Naive thymus-derived CD4-positive, alpha-beta T cell (primary cell): ENCODE measurements at regions of chr5 and their contacts with region 1.

Region 1: DNA sequence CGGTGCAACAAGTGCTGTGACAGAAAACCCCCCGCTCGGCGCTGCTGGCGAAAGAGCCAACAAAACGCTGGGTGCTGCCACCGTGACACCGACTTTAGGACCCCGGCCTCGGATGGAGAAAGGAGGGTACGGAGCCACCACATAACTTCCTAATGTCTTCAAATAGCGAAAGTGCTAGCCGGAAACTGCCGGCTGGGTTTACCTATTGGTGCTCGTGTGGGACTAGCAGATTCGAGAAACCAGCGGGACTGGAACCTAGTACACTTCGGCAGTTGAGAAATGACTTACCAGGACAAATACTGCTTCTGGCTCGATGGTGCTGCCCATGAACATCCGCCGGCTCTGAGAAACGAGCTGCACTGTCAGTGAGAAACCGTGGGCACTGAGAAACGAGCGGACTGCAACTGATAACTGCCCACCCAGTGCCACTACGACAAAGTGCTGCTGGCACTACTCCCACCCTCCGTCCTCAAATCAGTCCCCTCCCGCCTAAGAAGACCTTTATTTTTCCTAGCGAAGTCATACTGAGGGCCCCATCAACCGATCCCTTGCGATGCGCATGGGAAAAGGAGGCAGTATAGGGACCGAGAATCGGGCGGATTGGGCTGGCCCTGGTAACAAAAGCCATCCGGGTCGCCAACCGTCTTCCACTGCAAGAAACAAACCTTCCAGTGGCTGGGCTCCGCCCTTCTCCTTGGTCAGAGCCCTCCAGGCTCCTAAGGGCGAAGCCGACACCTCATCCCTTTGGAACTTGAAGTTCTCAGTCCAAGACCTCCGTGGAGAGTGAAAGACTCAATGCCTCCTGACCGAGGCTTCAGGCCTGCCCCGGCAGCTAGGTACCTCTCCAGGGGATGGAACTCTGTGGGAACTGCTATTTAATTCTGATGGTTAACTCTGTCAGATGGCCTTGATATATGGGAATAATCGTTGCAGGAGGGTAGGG is 27.0 kb upstream of the ANXA2R start:
- DNase-seq: peak; percentile 80 to 96 (median 89)
- ATAC-seq: peak; percentile 69
- H3K4me3 ChIP-seq: peak overlapping the region; percentile 82
- H3K4me3 Mint-ChIP-seq: peak overlapping the region; percentile 93 to 100 (median 98)
- H3K27ac ChIP-seq: peak overlapping the region; percentile 90
- H3K27ac Mint-ChIP-seq: peak overlapping the region; percentile 99 to 100 (median 99)
- H3K4me1 ChIP-seq: peaks cover 25 to 33% of the 10 kb centered on the region in 2 donors
- H3K4me1 Mint-ChIP-seq: peaks cover 26 to 67% (median 44%) of the 10 kb centered on the region in 7 donors
- H3K27me3 ChIP-seq: no peaks in the 10 kb centered on the region
- H3K27me3 Mint-ChIP-seq: no peaks in the 10 kb centered on the region

Region 2: GRCh38 chr5:41869739-41870626 is 1197.1 kb before region 1 on chr5 and contains the start of gene OXCT1:
- CTCF ChIA-PET with region 1: no interaction called
- POLR2A ChIA-PET with region 1: interaction called, 5 read pairs
- intact Hi-C with region 1: loop called in 1 of 2 experiments (anchors 1 kb)
- DNase-seq: peak; percentile 88 to 96 (median 95)
- ATAC-seq: peak; percentile 97
- H3K4me3 ChIP-seq: peak within 1 kb of the TSS; percentile 91
- H3K4me3 Mint-ChIP-seq: peak within 1 kb of the TSS; percentile 85 to 94 (median 90)
- H3K27ac ChIP-seq: peak within 1 kb of the TSS; percentile 97
- H3K27ac Mint-ChIP-seq: peak within 1 kb of the TSS; percentile 89 to 98 (median 97)
- H3K4me1 ChIP-seq: peaks cover 16% of the 10 kb centered on the region in 2 donors
- H3K4me1 Mint-ChIP-seq: peaks cover 18 to 63% (median 57%) of the 10 kb centered on the region in 7 donors
- H3K27me3 ChIP-seq: no peaks in the 10 kb centered on the region
- H3K27me3 Mint-ChIP-seq: no peaks in the 10 kb centered on the region
- total RNA-seq, gene OXCT1: 18.6 to 53.1 (median 30.0) TPM

Region 3: GRCh38 chr5:42950440-42951292 is 116.4 kb before region 1 on chr5:
- CTCF ChIA-PET with region 1: interaction called, 7 read pairs
- POLR2A ChIA-PET with region 1: interaction called, 103 read pairs
- intact Hi-C with region 1: loop called (anchors 1 kb)
- DNase-seq: peak in 8 of 9 donors; percentile 39 to 77 (median 51)
- ATAC-seq: peak; percentile 51
- H3K4me3 ChIP-seq: peak overlapping the region; percentile 80
- H3K4me3 Mint-ChIP-seq: peak overlapping the region; percentile 87 to 99 (median 97)
- H3K27ac ChIP-seq: peak overlapping the region; percentile 98
- H3K27ac Mint-ChIP-seq: peak overlapping the region; percentile 97 to 100 (median 99)
- H3K4me1 ChIP-seq: peaks cover 5 to 22% of the 10 kb centered on the region in 2 donors
- H3K4me1 Mint-ChIP-seq: peaks cover 13 to 51% (median 23%) of the 10 kb centered on the region in 7 donors
- H3K27me3 ChIP-seq: no peaks in the 10 kb centered on the region
- H3K27me3 Mint-ChIP-seq: peaks cover 0 to 9% (median 0%) of the 10 kb centered on the region in 5 donors

Region 4: DNA sequence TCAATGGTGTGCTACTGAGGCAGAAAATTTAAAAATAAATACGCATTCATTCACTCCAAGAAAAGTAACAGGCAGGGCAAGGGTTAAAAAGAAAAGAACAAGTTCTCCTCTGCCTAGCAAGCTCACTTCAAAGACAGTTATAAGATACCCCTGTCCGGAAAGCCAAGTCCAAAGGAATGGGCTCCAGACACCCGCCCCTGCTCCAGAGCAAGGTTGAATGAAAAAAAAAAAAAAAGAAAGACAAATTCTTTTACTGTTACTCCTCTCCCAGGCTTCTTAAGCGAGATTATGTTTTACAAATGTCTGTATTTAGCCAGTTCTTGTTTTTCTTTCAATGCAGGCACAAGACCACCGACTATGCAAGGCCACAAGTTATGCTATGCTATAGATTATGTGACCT is 17.8 kb before region 1 on chr5:
- CTCF ChIA-PET with region 1: interaction called, 6 read pairs
- POLR2A ChIA-PET with region 1: interaction called, 595 read pairs
- intact Hi-C with region 1: loop called in 1 of 2 experiments (anchors 1 kb)
- DNase-seq: no peak
- ATAC-seq: no peak
- H3K4me3 ChIP-seq: no peak overlapping the region
- H3K4me3 Mint-ChIP-seq: no peak overlapping the region
- H3K27ac ChIP-seq: no peak overlapping the region
- H3K27ac Mint-ChIP-seq: peak overlapping the region in 1 of 9 donors; percentile 45
- H3K4me1 ChIP-seq: peaks cover 5 to 7% of the 10 kb centered on the region in 2 donors
- H3K4me1 Mint-ChIP-seq: peaks cover 9 to 40% (median 31%) of the 10 kb centered on the region in 7 donors
- H3K27me3 ChIP-seq: no peaks in the 10 kb centered on the region
- H3K27me3 Mint-ChIP-seq: no peaks in the 10 kb centered on the region

Region 5: GRCh38 chr5:43191740-43192557 is 124.9 kb after region 1 on chr5 and contains the start of gene NIM1K:
- CTCF ChIA-PET with region 1: no interaction called
- POLR2A ChIA-PET with region 1: no interaction called
- intact Hi-C with region 1: loop called in 1 of 2 experiments (anchors 2 kb)
- DNase-seq: peak in 8 of 9 donors; percentile 7 to 55 (median 16)
- ATAC-seq: peak; percentile 51
- H3K4me3 ChIP-seq: peak within 1 kb of the TSS; percentile 63
- H3K4me3 Mint-ChIP-seq: peak within 1 kb of the TSS; percentile 81 to 94 (median 88)
- H3K27ac ChIP-seq: no peak within 1 kb of the TSS
- H3K27ac Mint-ChIP-seq: peak within 1 kb of the TSS in 6 of 9 donors; percentile 21 to 86 (median 71)
- H3K4me1 ChIP-seq: peaks cover 4 to 18% of the 10 kb centered on the region in 2 donors
- H3K4me1 Mint-ChIP-seq: peaks cover 11 to 33% (median 23%) of the 10 kb centered on the region in 7 donors
- H3K27me3 ChIP-seq: peaks cover 0 to 5% of the 10 kb centered on the region in 2 donors
- H3K27me3 Mint-ChIP-seq: peaks cover 15 to 22% (median 19%) of the 10 kb centered on the region in 5 donors
- total RNA-seq, gene NIM1K: 0.40 to 0.97 (median 0.61) TPM

Region 6: GRCh38 chr5:43556857-43557542 is 489.9 kb after region 1 on chr5 and contains the start of gene PAIP1:
- CTCF ChIA-PET with region 1: no interaction called
- POLR2A ChIA-PET with region 1: no interaction called
- intact Hi-C with region 1: loop called (anchors 2 kb)
- DNase-seq: peak; percentile 80 to 89 (median 87)
- ATAC-seq: peak; percentile 89
- H3K4me3 ChIP-seq: peak within 1 kb of the TSS; percentile 79
- H3K4me3 Mint-ChIP-seq: peak within 1 kb of the TSS in 7 of 10 donors; percentile 88 to 97 (median 95)
- H3K27ac ChIP-seq: peak within 1 kb of the TSS; percentile 96
- H3K27ac Mint-ChIP-seq: peak within 1 kb of the TSS; percentile 91 to 99 (median 98)
- H3K4me1 ChIP-seq: peaks cover 17 to 30% of the 10 kb centered on the region in 2 donors
- H3K4me1 Mint-ChIP-seq: peaks cover 6 to 17% (median 7%) of the 10 kb centered on the region in 7 donors
- H3K27me3 ChIP-seq: no peaks in the 10 kb centered on the region
- H3K27me3 Mint-ChIP-seq: peaks cover 0 to 18% (median 5%) of the 10 kb centered on the region in 5 donors
- total RNA-seq, gene PAIP1: 20.7 to 41.7 (median 39.2) TPM

Region 7: GRCh38 chr5:43926923-43927322 is 859.9 kb after region 1 on chr5:
- CTCF ChIA-PET with region 1: no interaction called
- POLR2A ChIA-PET with region 1: no interaction called
- intact Hi-C with region 1: no loop called
- DNase-seq: no peak
- ATAC-seq: no peak
- H3K4me3 ChIP-seq: no peak overlapping the region
- H3K4me3 Mint-ChIP-seq: no peak overlapping the region
- H3K27ac ChIP-seq: no peak overlapping the region
- H3K27ac Mint-ChIP-seq: no peak overlapping the region
- H3K4me1 ChIP-seq: no peaks in the 10 kb centered on the region
- H3K4me1 Mint-ChIP-seq: no peaks in the 10 kb centered on the region
- H3K27me3 ChIP-seq: no peaks in the 10 kb centered on the region
- H3K27me3 Mint-ChIP-seq: no peaks in the 10 kb centered on the region